Heart right ventricle (tissue), 16 donors: ENCODE measurements at regions of chr16 and their contacts with region 1.

Region 1: DNA sequence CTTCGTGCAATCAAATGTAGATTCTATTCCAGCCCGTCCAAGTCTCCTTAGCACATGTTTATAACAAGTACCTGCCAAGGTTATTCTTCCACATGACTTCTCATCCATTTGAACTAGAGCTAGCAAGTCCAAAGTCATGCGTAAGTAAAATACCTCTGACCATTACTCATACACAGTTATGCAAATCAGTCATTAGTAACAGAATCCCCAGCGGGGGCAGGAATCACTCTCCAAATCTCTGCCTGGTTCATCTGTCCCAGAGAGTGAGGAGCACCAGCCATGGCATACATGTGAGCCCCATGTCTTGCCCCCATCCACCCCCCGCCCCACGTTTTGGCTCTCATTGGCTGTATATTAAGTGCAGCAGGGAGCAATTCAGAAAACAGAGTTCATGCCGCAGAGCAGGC is 27.7 kb downstream of the SRL start:
- DNase-seq: no peak
- ATAC-seq: peak in 6 of 8 donors; percentile 15 to 49 (median 26)
- H3K4me3 ChIP-seq: no peak overlapping the region
- H3K27ac ChIP-seq: peak overlapping the region; percentile 76 to 97 (median 89)
- H3K4me1 ChIP-seq: peaks cover 40 to 97% (median 75%) of the 10 kb centered on the region in 9 donors
- H3K27me3 ChIP-seq: no peaks in the 10 kb centered on the region
- CTCF ChIP-seq: no peak

Region 2: GRCh38 chr16:4232541-4233386 is 18.5 kb after region 1 on chr16:
- intact Hi-C with region 1: loop called in 2 of 10 experiments (anchors 2 kb)
- DNase-seq: peak in 1 of 2 donors; percentile 16
- ATAC-seq: peak; percentile 19 to 80 (median 70)
- H3K4me3 ChIP-seq: peak overlapping the region in 1 of 10 donors; percentile 1
- H3K27ac ChIP-seq: peak overlapping the region; percentile 65 to 97 (median 80)
- H3K4me1 ChIP-seq: peaks cover 11 to 78% (median 41%) of the 10 kb centered on the region in 9 donors
- H3K27me3 ChIP-seq: no peaks in the 10 kb centered on the region
- CTCF ChIP-seq: no peak

Region 3: GRCh38 chr16:4239020-4239419 is 24.8 kb after region 1 on chr16:
- intact Hi-C with region 1: loop called in 3 of 10 experiments (anchors 2 to 5 kb)
- DNase-seq: peak in 1 of 2 donors; percentile 60
- ATAC-seq: peak; percentile 18 to 65 (median 52)
- H3K4me3 ChIP-seq: peak overlapping the region in 9 of 10 donors; percentile 40 to 61 (median 48)
- H3K27ac ChIP-seq: peak overlapping the region; percentile 3 to 97 (median 94)
- H3K4me1 ChIP-seq: peaks cover 3 to 67% (median 20%) of the 10 kb centered on the region in 9 donors
- H3K27me3 ChIP-seq: no peaks in the 10 kb centered on the region
- CTCF ChIP-seq: no peak

Region 4: GRCh38 chr16:4244254-4245076 is 30.2 kb after region 1 on chr16:
- intact Hi-C with region 1: loop called in 4 of 10 experiments (anchors 2 to 5 kb)
- DNase-seq: no peak
- ATAC-seq: no peak
- H3K4me3 ChIP-seq: no peak overlapping the region
- H3K27ac ChIP-seq: no peak overlapping the region
- H3K4me1 ChIP-seq: peaks cover 0 to 28% (median 0%) of the 10 kb centered on the region in 9 donors
- H3K27me3 ChIP-seq: no peaks in the 10 kb centered on the region
- CTCF ChIP-seq: no peak

Region 5: DNA sequence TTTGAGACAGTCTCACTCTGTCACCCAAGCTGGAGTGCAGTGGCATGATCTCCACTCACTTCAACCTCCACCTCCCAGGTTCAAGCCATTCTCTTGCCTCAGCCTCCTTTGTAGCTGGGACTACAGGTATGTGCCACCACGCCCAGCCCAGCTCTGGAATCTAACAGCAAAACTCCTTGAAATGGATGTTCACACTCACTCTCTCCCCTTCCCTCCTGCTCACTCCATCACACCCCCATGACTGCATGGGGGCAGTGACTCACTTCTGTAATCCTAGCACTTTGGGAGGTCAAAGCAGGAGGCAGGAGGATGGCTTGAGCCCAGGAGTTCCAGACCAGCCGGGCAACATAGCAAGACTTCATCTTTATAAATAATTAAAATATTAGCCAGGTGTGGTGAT is 69.7 kb after region 1 on chr16:
- intact Hi-C with region 1: no loop called
- DNase-seq: no peak
- ATAC-seq: no peak
- H3K4me3 ChIP-seq: no peak overlapping the region
- H3K27ac ChIP-seq: no peak overlapping the region
- H3K4me1 ChIP-seq: peaks cover 2 to 11% (median 9%) of the 10 kb centered on the region in 9 donors
- H3K27me3 ChIP-seq: peaks cover 0 to 3% (median 0%) of the 10 kb centered on the region in 7 donors
- CTCF ChIP-seq: no peak

Region 6: DNA sequence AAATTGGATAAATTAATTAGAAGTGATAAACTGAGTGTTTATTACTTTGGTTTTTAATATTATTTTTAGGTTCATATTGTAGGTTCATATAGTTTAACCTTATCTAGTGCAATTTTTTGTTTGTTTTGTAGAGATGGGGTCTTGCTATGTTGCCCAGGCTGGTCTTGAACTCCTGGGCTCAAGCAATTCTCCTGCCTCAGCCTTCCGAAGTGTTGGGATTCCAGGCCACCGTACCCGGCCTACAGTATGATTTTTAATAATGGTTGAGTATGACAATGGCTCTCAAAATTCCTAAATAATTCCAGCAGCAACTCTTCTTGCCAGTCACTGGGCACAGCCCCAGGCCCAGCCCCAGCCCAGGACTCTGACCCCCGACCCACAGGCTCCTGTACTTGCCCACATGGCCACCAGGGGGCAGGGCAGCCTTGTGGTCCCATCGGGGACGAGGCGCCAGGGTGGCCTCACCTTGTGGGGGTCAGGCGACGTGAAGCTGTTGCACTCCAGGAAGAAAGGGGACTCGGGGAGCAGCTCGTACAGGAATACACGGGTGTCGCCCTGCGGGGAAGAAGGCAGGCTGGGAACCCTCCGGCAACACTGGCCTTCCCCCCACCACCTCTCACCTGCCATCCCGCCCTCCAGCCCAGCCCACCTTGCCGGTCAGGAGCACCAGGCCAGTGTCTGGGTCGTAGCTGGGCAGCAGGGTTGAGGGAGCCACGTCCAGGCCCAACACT is 144.8 kb after region 1 on chr16:
- intact Hi-C with region 1: no loop called
- DNase-seq: peak; percentile 58 to 78
- ATAC-seq: peak; percentile 43 to 84 (median 72)
- H3K4me3 ChIP-seq: no peak overlapping the region
- H3K27ac ChIP-seq: no peak overlapping the region
- H3K4me1 ChIP-seq: no peaks in the 10 kb centered on the region
- H3K27me3 ChIP-seq: no peaks in the 10 kb centered on the region
- CTCF ChIP-seq: peak; percentile 88 to 96 (median 94)